KBM-7 (cell line): ENCODE measurements at regions of chr21 and their contacts with region 1.

Region 1: DNA sequence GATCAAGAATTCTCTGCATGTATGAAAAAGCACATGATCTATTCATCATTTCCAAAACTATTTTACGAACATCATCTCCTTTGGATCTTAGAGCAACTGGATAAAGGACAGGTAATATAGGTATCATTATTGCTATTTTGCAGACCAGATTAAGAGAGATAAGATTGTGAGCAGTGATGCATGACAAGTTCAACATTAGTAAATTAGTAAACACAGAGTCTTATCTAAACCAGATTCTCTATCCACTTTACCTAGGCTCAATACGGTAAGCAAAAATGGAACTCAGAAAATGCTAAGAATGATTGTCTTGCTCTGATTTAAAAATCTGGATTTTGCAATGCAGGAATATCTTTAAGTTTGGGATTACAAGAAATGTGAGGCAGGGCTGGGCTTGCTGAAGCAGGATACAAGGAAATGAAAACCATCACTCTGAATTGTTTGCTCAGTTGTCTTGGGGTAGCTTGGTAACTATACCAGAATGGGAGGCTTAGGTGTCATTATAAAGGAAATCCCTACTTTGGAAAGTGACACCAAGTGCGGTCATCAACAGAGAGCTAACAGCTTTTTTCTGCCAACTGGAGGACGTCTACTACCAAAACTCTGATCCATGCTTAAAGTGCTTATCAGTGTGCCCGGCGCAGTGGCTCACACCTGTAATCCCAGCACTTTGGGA is 332.7 kb upstream of the RUNX1 start:
- DNase-seq: no peak

Region 2: GRCh38 chr21:35294231-35294898 is 87.4 kb before region 1 on chr21:
- in situ Hi-C with region 1: no loop called
- DNase-seq: no peak

Region 3: DNA sequence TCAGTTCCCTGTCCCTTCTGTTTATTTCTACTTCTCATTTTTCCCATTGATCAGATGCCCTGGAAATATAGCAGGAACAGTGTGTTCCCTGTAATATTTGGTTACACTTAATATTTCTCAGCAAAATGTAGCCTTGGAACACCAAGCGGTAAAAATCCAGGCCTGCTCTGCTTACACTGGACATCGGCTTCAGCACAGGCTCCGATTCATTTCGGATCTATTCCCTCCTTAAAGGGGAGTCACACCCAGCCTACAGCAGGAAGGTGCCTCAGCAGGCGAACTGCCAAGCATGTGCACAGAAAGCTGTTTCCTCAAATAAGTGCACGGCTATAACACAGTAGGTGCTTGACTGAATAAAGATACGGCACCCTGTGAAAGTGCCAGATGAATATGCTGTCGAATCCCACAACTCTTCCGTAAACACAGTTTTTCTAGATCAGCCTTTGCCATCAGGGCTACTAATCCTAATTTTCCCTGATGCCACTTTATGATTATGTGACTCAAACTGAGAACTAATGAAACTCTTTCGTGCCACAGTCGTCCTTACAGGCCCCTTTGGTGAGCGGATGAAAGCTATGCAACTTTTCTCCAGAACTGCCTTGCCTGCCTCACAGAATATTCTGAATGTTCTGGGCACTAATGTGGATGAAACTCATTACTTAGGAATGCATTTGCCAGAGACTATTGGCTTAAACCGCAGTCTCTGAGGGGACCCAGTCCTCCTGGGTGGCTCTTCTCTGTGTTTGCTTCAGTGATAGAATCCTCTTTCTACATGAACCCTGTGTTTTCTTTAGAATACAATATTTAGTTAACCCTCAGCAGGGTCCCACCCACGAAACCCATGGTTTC is 57.2 kb before region 1 on chr21:
- in situ Hi-C with region 1: loop called (anchors 10 kb)
- DNase-seq: no peak

Region 4: GRCh38 chr21:35932232-35932911 is 550.6 kb after region 1 on chr21:
- in situ Hi-C with region 1: no loop called
- DNase-seq: peak; percentile 93